A673 (cell line): ENCODE measurements at regions of chr17 and their contacts with region 1.

Region 1: GRCh38 chr17:78250891-78251794 is 19.7 kb downstream of the TMEM235 start:
- DNase-seq: peak; percentile 91
- H3K4me3 ChIP-seq: no peak overlapping the region
- H3K27ac ChIP-seq: no peak overlapping the region
- H3K4me1 ChIP-seq: no peaks in the 10 kb centered on the region
- H3K27me3 ChIP-seq: no peaks in the 10 kb centered on the region
- CTCF ChIP-seq: peak; percentile 100

Region 2: GRCh38 chr17:78223765-78224164 is 27.4 kb before region 1 on chr17:
- CTCF ChIA-PET with region 1: no interaction called
- POLR2A ChIA-PET with region 1: interaction called, 13 read pairs
- intact Hi-C with region 1: no loop called
- DNase-seq: no peak
- H3K4me3 ChIP-seq: no peak overlapping the region
- H3K27ac ChIP-seq: no peak overlapping the region
- H3K4me1 ChIP-seq: peaks cover 6% of the 10 kb centered on the region
- H3K27me3 ChIP-seq: no peaks in the 10 kb centered on the region
- CTCF ChIP-seq: no peak

Region 3: DNA sequence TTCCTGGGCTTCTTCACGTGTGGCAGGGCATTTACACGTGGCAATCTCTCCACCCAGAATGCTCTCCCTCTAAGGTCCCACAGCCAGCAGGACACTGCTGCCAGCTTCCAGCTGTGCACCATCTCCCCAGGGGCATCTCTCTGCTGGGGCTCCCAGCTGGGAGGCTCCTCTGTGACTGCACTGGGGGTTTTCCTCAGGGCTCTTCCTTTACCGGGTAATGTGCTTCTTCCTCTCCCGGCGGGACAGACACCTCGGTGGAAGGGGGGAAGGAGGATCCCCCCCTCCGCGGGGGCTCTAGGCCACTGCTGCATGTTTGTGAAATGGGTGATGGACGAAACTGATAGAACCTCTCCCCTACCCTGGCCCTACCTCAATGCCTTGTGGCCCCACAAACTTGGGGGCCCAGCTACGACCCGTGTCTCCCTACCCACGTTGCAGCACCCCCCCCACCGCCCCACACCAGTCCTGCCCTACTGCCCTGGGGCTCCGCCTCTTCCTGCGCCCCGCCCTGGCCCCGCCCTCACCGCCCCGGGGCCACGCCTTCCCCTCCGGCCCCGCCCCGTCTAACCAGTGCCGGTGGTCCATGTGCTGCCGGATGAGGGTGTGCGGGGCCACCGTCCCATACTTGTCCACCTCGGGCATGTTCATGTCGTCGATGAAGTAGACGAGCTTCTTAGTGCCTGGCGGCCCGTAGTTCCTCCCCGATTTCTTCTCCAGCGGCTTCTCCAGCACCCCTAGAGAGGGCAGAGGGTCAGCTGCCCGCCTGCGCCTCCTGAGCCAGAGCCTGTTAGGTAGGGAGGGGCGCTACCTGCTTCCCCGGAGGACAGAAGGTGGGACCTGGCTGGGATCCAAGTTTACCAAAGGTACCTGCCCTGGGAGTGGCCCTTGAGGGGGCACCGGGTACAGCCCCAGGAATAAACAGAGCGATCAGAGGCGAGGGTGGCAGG is 233.4 kb after region 1 on chr17:
- CTCF ChIA-PET with region 1: no interaction called
- POLR2A ChIA-PET with region 1: no interaction called
- intact Hi-C with region 1: no loop called
- DNase-seq: peak; percentile 72
- H3K4me3 ChIP-seq: peak overlapping the region; percentile 47
- H3K27ac ChIP-seq: no peak overlapping the region
- H3K4me1 ChIP-seq: peaks cover 7% of the 10 kb centered on the region
- H3K27me3 ChIP-seq: no peaks in the 10 kb centered on the region
- CTCF ChIP-seq: no peak